ENCODE measurements at regions of chr11 and their contacts with region 1.

Region 1: GRCh38 chr11:56783448-56784041 is 35.0 kb upstream of the OR9G4 start:
- DNase-seq: peak; percentile 13 to 54 (median 16)
- ATAC-seq: peak; percentile 49; the same call in 1 of the 3 replicates
- H3K4me3 ChIP-seq: no peak overlapping the region
- H3K27ac ChIP-seq: no peak overlapping the region
- H3K4me1 ChIP-seq: no peaks in the 10 kb centered on the region
- H3K27me3 ChIP-seq: no peaks in the 10 kb centered on the region
- CTCF ChIP-seq: peak; percentile 16 to 54 (median 42); a peak in 4 of 6 replicates
- EP300 ChIP-seq: no peak
- POLR2A ChIP-seq: no peak
- RAD21 ChIP-seq: peak; percentile 55 to 65

Region 2: GRCh38 chr11:55714982-55715888 is 1068.3 kb before region 1 on chr11:
- CTCF ChIA-PET with region 1: no interaction called
- POLR2A ChIA-PET with region 1: no interaction called
- in situ Hi-C with region 1: no loop called
- intact Hi-C with region 1: loop called (anchors 5 kb)
- DNase-seq: peak in 2 of 4 experiments; percentile 8 to 20
- ATAC-seq: no peak
- H3K4me3 ChIP-seq: no peak overlapping the region
- H3K27ac ChIP-seq: no peak overlapping the region
- H3K4me1 ChIP-seq: no peaks in the 10 kb centered on the region
- H3K27me3 ChIP-seq: no peaks in the 10 kb centered on the region
- CTCF ChIP-seq: peak; percentile 15 to 49 (median 26); a peak in 3 of 6 replicates
- EP300 ChIP-seq: no peak
- POLR2A ChIP-seq: no peak
- RAD21 ChIP-seq: no peak

Region 3: DNA sequence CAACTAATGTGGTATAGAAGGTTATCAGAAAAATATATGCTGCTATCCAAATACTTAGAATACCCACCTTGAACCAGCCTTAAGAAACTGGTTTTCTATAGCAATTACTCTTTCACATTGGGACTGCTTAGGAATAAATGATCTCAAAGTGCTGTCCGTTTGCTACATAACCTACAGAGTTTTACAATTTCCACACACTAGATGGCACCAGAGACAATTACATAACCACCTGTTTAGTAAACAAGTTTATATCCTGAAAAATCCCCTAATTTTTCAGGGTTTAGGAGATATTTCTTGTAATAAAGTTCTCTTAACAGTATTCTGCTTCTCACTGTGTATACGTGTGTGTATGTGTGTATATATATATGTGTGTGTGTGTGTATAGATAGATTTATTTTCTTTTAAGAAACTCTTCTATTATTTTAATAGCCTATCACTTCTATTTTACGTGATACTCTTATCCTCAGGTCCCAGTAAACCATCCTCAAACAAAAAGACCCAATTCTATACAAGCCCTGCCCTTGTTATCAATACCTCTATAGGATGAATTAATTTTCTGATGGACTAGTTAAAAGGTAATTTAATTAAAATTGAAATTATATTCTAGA is 840.7 kb before region 1 on chr11:
- CTCF ChIA-PET with region 1: interaction called, 3 read pairs
- POLR2A ChIA-PET with region 1: no interaction called
- in situ Hi-C with region 1: loop called (anchors 25 kb)
- intact Hi-C with region 1: loop called (anchors 2 kb)
- DNase-seq: peak; percentile 4 to 28 (median 5)
- ATAC-seq: no peak
- H3K4me3 ChIP-seq: no peak overlapping the region
- H3K27ac ChIP-seq: no peak overlapping the region
- H3K4me1 ChIP-seq: no peaks in the 10 kb centered on the region
- H3K27me3 ChIP-seq: no peaks in the 10 kb centered on the region
- CTCF ChIP-seq: peak; percentile 3 to 43 (median 14); a peak in 2 of 6 replicates
- EP300 ChIP-seq: no peak
- POLR2A ChIP-seq: no peak
- RAD21 ChIP-seq: peak; percentile 58 to 62

Region 4: GRCh38 chr11:56637500-56637899 is 146.0 kb before region 1 on chr11:
- CTCF ChIA-PET with region 1: no interaction called
- POLR2A ChIA-PET with region 1: no interaction called
- in situ Hi-C with region 1: no loop called
- intact Hi-C with region 1: no loop called
- DNase-seq: no peak
- ATAC-seq: no peak
- H3K4me3 ChIP-seq: no peak overlapping the region
- H3K27ac ChIP-seq: no peak overlapping the region
- H3K4me1 ChIP-seq: no peaks in the 10 kb centered on the region
- H3K27me3 ChIP-seq: no peaks in the 10 kb centered on the region
- CTCF ChIP-seq: no peak
- EP300 ChIP-seq: no peak
- POLR2A ChIP-seq: no peak
- RAD21 ChIP-seq: no peak

Region 5: DNA sequence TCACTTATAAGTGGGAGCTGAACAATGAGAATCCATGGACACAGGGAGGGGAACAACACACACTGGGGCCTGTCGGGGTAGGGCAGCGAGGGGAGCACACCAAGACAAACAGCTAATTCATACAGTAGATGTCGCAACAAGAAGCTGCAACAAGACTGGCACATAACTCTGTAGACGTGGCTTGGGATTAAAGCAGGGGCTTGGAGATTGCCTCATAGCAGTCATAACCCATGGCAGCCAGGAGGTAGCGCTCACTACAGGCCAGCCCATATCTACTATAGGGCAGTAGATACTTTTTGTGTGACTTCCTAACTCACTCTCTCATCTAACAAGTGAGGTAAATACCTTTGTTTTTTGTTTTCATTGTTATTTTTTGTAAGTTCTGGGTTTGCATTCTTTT is 33.4 kb before region 1 on chr11:
- CTCF ChIA-PET with region 1: no interaction called
- POLR2A ChIA-PET with region 1: no interaction called
- in situ Hi-C with region 1: no loop called
- intact Hi-C with region 1: no loop called
- DNase-seq: no peak
- ATAC-seq: no peak
- H3K4me3 ChIP-seq: no peak overlapping the region
- H3K27ac ChIP-seq: no peak overlapping the region
- H3K4me1 ChIP-seq: no peaks in the 10 kb centered on the region
- H3K27me3 ChIP-seq: no peaks in the 10 kb centered on the region
- CTCF ChIP-seq: no peak
- EP300 ChIP-seq: no peak
- POLR2A ChIP-seq: no peak
- RAD21 ChIP-seq: no peak

Region 6: DNA sequence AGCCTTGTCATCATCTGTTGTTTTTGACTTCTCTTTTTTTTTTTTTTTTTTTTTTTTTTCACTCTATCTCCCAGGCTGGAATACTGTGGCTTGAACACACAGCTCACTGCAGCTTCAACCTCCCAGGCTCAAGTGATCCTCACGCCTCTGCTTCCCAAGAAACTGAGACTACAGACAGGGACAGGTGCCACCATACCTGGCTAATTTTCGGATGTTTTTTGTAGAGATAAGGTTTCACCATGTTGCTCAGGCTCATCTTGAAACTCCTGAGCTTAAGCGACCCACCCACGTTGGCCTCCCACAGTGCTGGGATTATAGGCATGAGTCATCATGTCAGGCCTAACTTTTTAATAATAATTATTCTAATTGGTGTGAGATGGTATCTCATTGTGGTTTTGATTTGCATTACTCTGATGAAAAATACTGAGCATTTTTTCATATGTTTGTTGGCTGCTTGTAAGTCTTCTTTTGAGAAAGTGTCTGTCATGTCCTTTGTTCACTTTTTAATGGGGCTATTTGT is 16.2 kb after region 1 on chr11:
- CTCF ChIA-PET with region 1: no interaction called
- POLR2A ChIA-PET with region 1: no interaction called
- in situ Hi-C with region 1: no loop called
- intact Hi-C with region 1: no loop called
- DNase-seq: no peak
- ATAC-seq: no peak
- H3K4me3 ChIP-seq: no peak overlapping the region
- H3K27ac ChIP-seq: no peak overlapping the region
- H3K4me1 ChIP-seq: no peaks in the 10 kb centered on the region
- H3K27me3 ChIP-seq: no peaks in the 10 kb centered on the region
- CTCF ChIP-seq: no peak
- EP300 ChIP-seq: no peak
- POLR2A ChIP-seq: no peak
- RAD21 ChIP-seq: no peak

Measured in K562 (cell line).